Breast epithelium (tissue), 4 donors: ENCODE measurements at regions of chr15 and their contacts with region 1.

Region 1: GRCh38 chr15:74387576-74388352 is 20.3 kb upstream of the CYP11A1 start:
- DNase-seq: peak in 1 of 2 donors; percentile 62
- H3K4me3 ChIP-seq: no peak overlapping the region
- H3K27ac ChIP-seq: peak overlapping the region; percentile 14 to 80
- H3K4me1 ChIP-seq: peaks cover 0 to 13% of the 10 kb centered on the region in 2 donors
- H3K27me3 ChIP-seq: no peaks in the 10 kb centered on the region
- CTCF ChIP-seq: no peak
- POLR2A ChIP-seq: no peak

Region 2: GRCh38 chr15:73994419-73994883 is 393.3 kb before region 1 on chr15 and contains the start of gene PML:
- intact Hi-C with region 1: no loop called
- DNase-seq: peak; percentile 95 to 96
- H3K4me3 ChIP-seq: peak within 1 kb of the TSS; percentile 86 to 96 (median 93)
- H3K27ac ChIP-seq: peak within 1 kb of the TSS; percentile 97 to 98
- H3K4me1 ChIP-seq: peaks cover 15 to 26% of the 10 kb centered on the region in 2 donors
- H3K27me3 ChIP-seq: no peaks in the 10 kb centered on the region
- CTCF ChIP-seq: no peak
- POLR2A ChIP-seq: no peak
- total RNA-seq, gene PML: 37.8 to 103 (median 49.8) TPM

Region 3: GRCh38 chr15:74433592-74434262 is 46.0 kb after region 1 on chr15 and contains the start of gene SEMA7A:
- intact Hi-C with region 1: loop called (anchors 1 kb)
- DNase-seq: peak in 1 of 2 donors; percentile 54
- H3K4me3 ChIP-seq: peak within 1 kb of the TSS; percentile 57 to 70 (median 69)
- H3K27ac ChIP-seq: peak within 1 kb of the TSS; percentile 35 to 49
- H3K4me1 ChIP-seq: peaks cover 4 to 8% of the 10 kb centered on the region in 2 donors
- H3K27me3 ChIP-seq: peaks cover 3 to 9% of the 10 kb centered on the region in 2 donors
- CTCF ChIP-seq: no peak
- POLR2A ChIP-seq: no peak
- total RNA-seq, gene SEMA7A: 0.80 to 1.3 (median 0.88) TPM

Region 4: GRCh38 chr15:74664028-74664616 is 276.4 kb after region 1 on chr15:
- intact Hi-C with region 1: no loop called
- DNase-seq: no peak
- H3K4me3 ChIP-seq: no peak overlapping the region
- H3K27ac ChIP-seq: peak overlapping the region; percentile 54 to 64
- H3K4me1 ChIP-seq: peaks cover 0 to 8% of the 10 kb centered on the region in 2 donors
- H3K27me3 ChIP-seq: no peaks in the 10 kb centered on the region
- CTCF ChIP-seq: no peak
- POLR2A ChIP-seq: no peak